ENCODE measurements at regions of chr13 and their contacts with region 1.

Region 1: GRCh38 chr13:77555246-77555645 is 19.7 kb downstream of the SCEL start:
- DNase-seq: no peak
- H3K4me3 Mint-ChIP-seq: no peak overlapping the region
- H3K27ac Mint-ChIP-seq: no peak overlapping the region
- H3K4me1 Mint-ChIP-seq: no peaks in the 10 kb centered on the region
- H3K27me3 Mint-ChIP-seq: no peaks in the 10 kb centered on the region
- CTCF ChIP-seq: no peak

Region 2: DNA sequence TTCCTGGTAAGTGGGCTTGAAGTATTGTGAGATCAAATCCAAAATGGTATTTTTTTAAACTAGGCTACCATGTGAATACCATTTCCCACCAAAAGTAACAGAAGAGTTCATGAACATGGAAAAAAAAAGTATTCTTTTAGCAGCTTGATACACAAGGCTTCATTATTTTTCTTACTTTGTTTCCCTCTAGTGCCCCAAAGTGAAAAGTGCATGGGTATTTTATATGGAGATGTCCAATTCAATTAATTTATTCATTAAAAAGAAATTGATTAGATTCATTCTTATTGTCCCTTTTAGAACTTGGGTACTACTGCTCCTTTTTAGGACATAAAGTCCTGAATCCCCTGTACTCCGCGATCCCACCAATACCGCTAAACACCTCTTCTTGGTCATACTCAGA is 48.4 kb before region 1 on chr13:
- CTCF ChIA-PET with region 1: interaction called, 3 read pairs
- intact Hi-C with region 1: loop called (anchors 5 kb)
- DNase-seq: no peak
- H3K4me3 Mint-ChIP-seq: no peak overlapping the region
- H3K27ac Mint-ChIP-seq: no peak overlapping the region
- H3K4me1 Mint-ChIP-seq: no peaks in the 10 kb centered on the region
- H3K27me3 Mint-ChIP-seq: no peaks in the 10 kb centered on the region
- CTCF ChIP-seq: no peak

Region 3: DNA sequence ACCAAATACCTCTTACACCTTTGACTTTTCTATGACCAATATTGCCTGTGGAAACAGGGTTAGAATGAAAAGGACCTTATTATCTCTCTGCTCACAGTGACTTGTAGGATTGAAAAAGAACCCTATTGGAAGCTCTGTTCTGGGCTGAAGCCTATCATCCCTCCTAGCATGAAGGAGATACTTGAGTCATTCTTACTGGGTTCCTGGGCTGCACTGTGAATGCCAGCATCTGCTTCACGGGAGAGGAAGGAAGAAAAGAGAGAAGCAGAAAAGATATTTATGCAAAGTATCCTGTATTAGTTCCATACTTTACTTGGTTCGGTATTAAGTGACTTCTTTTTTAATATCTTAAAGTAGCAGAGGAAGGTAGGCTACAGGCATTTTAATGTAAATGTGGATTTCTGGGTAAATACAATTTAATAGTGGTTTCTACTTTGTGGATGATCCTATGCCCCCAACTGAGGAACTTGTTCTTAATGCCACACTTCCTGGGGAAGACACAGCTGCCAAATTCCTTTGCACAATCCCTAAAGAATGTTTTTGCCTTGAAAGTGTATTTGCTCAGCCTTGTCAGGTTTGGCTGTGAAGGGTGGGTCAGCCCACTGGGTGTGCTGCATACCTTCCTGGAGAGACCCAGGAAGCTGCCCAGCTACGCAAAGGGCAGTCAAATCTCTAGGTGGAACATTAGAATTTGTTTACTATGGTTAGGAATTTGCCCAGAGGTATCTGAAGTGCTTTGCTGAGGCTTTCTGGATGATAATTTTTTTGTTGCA is 33.5 kb before region 1 on chr13:
- CTCF ChIA-PET with region 1: no interaction called
- intact Hi-C with region 1: loop called (anchors 5 kb)
- DNase-seq: peak; percentile 48
- H3K4me3 Mint-ChIP-seq: no peak overlapping the region
- H3K27ac Mint-ChIP-seq: no peak overlapping the region
- H3K4me1 Mint-ChIP-seq: peaks cover 13% of the 10 kb centered on the region
- H3K27me3 Mint-ChIP-seq: no peaks in the 10 kb centered on the region
- CTCF ChIP-seq: no peak

Measured in Calu3 (cell line).